ENCODE measurements at regions of chr6 and their contacts with region 1.

Region 1: DNA sequence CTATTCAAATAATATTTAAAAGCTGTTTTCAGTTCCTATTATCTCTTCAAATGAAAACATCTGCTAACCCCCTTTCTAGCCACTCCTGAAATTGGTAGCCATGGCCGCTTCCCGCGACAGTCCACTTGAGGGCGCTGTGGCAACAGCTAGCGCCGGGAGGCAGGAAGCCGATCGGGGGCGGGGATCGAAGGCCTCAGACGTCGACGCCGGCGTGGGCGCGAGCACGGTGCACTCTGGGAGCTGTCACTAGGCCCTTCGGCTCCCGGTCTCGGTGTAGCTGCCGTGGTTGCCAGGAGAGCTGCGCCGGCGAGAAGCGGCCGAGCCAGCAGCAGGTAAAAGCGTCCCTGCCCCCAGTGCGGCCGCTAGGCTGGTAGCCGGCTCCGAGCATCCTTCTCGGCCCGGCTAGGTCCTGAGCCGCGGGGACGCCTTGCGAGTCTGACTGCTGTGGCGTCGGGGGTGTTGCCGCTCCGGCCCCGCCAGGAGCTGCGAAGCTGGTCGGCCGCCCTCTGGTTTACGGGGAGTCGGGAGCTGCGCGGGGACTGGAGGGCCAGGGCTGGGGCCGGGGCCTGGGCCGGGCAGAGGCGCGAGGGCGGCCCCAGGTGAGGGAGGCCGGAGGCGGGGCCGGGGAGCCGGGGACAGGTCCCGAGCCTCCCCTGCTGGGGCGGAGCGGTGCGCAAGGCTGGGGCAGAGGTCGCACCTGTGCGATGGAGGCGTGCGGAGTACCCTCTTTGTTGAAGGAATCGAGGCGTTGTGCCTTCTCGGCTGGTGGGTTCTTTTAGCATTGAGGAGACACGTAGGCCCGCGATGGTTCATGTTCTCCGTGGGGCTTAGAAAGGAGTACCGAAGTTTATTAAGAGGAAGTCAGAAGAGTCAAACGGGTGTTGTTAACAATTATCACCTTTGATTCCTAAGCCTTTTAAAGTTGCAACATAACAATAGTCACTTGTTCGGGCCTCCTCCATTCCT is at the start of gene DOP1A:
- DNase-seq: peak; percentile 91
- ATAC-seq: peak; percentile 89
- H3K4me3 ChIP-seq: peak within 1 kb of the TSS; percentile 89
- H3K27ac ChIP-seq: peak within 1 kb of the TSS; percentile 62
- H3K4me1 ChIP-seq: no peaks in the 10 kb centered on the region
- H3K27me3 ChIP-seq: no peaks in the 10 kb centered on the region
- CTCF ChIP-seq: peak; percentile 99
- POLR2A ChIP-seq: 0 out of 2 replicates have a peak, but pooled peaks have one; percentile 31
- RAD21 ChIP-seq: peak; percentile 99
- total RNA-seq, gene DOP1A: 32.4 and 35.8 TPM in 2 replicates

Region 2: DNA sequence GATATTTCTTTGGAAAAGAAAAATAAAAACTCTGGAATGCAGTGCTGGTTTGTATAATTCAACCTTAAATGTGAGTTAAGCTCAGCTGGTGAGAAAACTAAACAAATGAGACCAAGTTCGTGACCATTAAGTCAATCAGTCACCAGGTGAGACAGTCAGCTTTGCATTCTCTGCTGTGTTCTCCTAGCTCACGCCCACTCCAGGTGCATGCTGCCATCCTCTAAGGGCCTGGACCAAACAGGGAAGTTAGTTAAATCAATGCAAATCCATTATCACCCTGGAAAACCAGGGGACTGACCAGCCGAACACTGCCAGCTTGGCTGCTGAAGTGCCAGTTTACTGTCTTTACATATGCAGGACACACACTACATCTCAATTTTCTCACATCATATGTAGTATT is 696.9 kb before region 1 on chr6:
- CTCF ChIA-PET with region 1: no interaction called
- POLR2A ChIA-PET with region 1: interaction called, 15 read pairs
- dilution Hi-C with region 1: no loop called
- in situ Hi-C with region 1: loop called (anchors 25 kb)
- intact Hi-C with region 1: no loop called
- DNase-seq: no peak
- ATAC-seq: no peak
- H3K4me3 ChIP-seq: no peak overlapping the region
- H3K27ac ChIP-seq: peak overlapping the region; percentile 6; the same call in 1 of the 2 replicates
- H3K4me1 ChIP-seq: peaks cover 14% of the 10 kb centered on the region
- H3K27me3 ChIP-seq: no peaks in the 10 kb centered on the region
- CTCF ChIP-seq: no peak
- POLR2A ChIP-seq: no peak
- RAD21 ChIP-seq: no peak

Region 3: GRCh38 chr6:83055366-83055964 is 12.3 kb before region 1 on chr6:
- CTCF ChIA-PET with region 1: no interaction called
- POLR2A ChIA-PET with region 1: no interaction called
- dilution Hi-C with region 1: no loop called
- in situ Hi-C with region 1: no loop called
- intact Hi-C with region 1: no loop called
- DNase-seq: peak; percentile 47
- ATAC-seq: peak; percentile 90
- H3K4me3 ChIP-seq: no peak overlapping the region
- H3K27ac ChIP-seq: no peak overlapping the region
- H3K4me1 ChIP-seq: no peaks in the 10 kb centered on the region
- H3K27me3 ChIP-seq: no peaks in the 10 kb centered on the region
- CTCF ChIP-seq: peak; percentile 88
- POLR2A ChIP-seq: no peak
- RAD21 ChIP-seq: peak; percentile 87

Region 4: GRCh38 chr6:83199863-83200225 is 132.1 kb after region 1 on chr6:
- CTCF ChIA-PET with region 1: interaction called, 19 read pairs
- POLR2A ChIA-PET with region 1: no interaction called
- dilution Hi-C with region 1: no loop called
- in situ Hi-C with region 1: loop called (anchors 5 kb)
- intact Hi-C with region 1: no loop called
- DNase-seq: peak; percentile 92
- ATAC-seq: peak; percentile 68
- H3K4me3 ChIP-seq: no peak overlapping the region
- H3K27ac ChIP-seq: no peak overlapping the region
- H3K4me1 ChIP-seq: peaks cover 17% of the 10 kb centered on the region
- H3K27me3 ChIP-seq: no peaks in the 10 kb centered on the region
- CTCF ChIP-seq: no peak
- POLR2A ChIP-seq: no peak
- RAD21 ChIP-seq: no peak

Region 5: DNA sequence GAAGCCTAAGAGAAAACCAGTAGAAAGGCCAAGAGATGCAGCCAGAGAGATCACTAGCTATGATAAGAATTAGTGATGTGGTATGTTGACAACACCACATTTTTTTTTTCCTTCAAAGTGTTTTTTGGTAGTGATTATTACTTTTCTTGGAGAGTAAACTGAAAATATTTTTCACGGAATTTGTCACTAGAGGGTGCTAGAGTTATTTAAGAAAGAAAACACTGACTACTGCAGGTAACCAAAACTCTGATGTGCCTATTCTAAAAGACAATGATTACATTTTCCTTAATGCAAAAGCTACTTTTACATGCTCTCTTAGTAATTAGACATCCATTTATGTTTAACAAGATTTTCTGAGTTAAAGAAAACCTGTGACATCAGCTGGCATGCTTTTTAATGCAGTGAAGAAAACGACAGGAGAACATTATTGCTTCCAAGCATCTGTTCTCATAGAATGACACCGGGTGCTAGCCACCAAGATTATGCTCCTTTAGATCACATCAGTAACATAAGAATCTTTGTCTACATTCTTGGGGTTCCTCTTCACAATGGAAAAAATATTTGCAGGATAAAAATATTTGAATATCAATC is 154.3 kb after region 1 on chr6:
- CTCF ChIA-PET with region 1: interaction called, 71 read pairs
- POLR2A ChIA-PET with region 1: no interaction called
- dilution Hi-C with region 1: no loop called
- in situ Hi-C with region 1: no loop called
- intact Hi-C with region 1: no loop called
- DNase-seq: peak; percentile 54
- ATAC-seq: 0 out of 2 replicates have a peak, but pooled peaks have one; percentile 19
- H3K4me3 ChIP-seq: no peak overlapping the region
- H3K27ac ChIP-seq: no peak overlapping the region
- H3K4me1 ChIP-seq: peaks cover 5% of the 10 kb centered on the region
- H3K27me3 ChIP-seq: no peaks in the 10 kb centered on the region
- CTCF ChIP-seq: peak; percentile 63
- POLR2A ChIP-seq: peak; percentile 49
- RAD21 ChIP-seq: peak; percentile 67

Region 6: GRCh38 chr6:83514866-83515466 is 447.2 kb after region 1 on chr6:
- CTCF ChIA-PET with region 1: interaction called, 74 read pairs
- POLR2A ChIA-PET with region 1: no interaction called
- dilution Hi-C with region 1: loop called (anchors 25 kb)
- in situ Hi-C with region 1: loop called (anchors 5 kb)
- intact Hi-C with region 1: loop called (anchors 1 kb)
- DNase-seq: peak; percentile 80
- ATAC-seq: 0 out of 2 replicates have a peak, but pooled peaks have one; percentile 30
- H3K4me3 ChIP-seq: no peak overlapping the region
- H3K27ac ChIP-seq: no peak overlapping the region
- H3K4me1 ChIP-seq: no peaks in the 10 kb centered on the region; the same call in 1 of the 2 replicates
- H3K27me3 ChIP-seq: no peaks in the 10 kb centered on the region
- CTCF ChIP-seq: peak; percentile 96
- POLR2A ChIP-seq: no peak
- RAD21 ChIP-seq: peak; percentile 93